Ovary (tissue), 10 donors: ENCODE measurements at regions of chr5 and their contacts with region 1.

Region 1: GRCh38 chr5:169302491-169303118 is 1.7 kb upstream of the SLIT3 start:
- DNase-seq: peak; percentile 63 to 82 (median 81)
- H3K4me3 ChIP-seq: no peak overlapping the region
- H3K27ac ChIP-seq: no peak overlapping the region
- H3K4me1 ChIP-seq: peaks cover 3% of the 10 kb centered on the region
- H3K27me3 ChIP-seq: no peaks in the 10 kb centered on the region
- CTCF ChIP-seq: peak; percentile 67 to 80 (median 70)
- EP300 ChIP-seq: no peak
- POLR2A ChIP-seq: no peak

Region 2: DNA sequence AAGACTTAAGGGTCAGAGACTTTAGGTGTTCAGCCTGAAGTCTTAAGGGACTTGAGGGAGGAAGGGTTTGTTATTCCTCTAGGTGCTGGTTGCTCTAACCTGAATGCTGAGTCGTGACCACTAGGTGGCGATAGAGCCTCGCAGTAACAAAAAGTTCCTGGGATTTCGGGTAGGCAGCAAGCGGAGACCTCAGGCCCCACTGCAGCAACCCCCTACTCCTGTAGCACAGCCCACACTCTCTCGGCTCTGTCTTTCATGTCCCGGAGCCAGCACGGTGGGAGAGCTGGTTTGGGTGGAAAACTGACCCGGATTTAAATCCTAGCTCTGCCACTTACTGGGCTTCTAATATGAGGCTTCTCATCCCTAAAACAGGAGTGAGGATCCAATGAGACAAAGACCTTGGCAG is 623.1 kb before region 1 on chr5:
- intact Hi-C with region 1: loop called in 3 of 4 experiments (anchors 5 to 10 kb)
- DNase-seq: peak; percentile 65 to 87 (median 84)
- H3K4me3 ChIP-seq: no peak overlapping the region
- H3K27ac ChIP-seq: no peak overlapping the region
- H3K4me1 ChIP-seq: peaks cover 8% of the 10 kb centered on the region
- H3K27me3 ChIP-seq: no peaks in the 10 kb centered on the region
- CTCF ChIP-seq: peak; percentile 76 to 84 (median 77)
- EP300 ChIP-seq: no peak
- POLR2A ChIP-seq: no peak

Region 3: DNA sequence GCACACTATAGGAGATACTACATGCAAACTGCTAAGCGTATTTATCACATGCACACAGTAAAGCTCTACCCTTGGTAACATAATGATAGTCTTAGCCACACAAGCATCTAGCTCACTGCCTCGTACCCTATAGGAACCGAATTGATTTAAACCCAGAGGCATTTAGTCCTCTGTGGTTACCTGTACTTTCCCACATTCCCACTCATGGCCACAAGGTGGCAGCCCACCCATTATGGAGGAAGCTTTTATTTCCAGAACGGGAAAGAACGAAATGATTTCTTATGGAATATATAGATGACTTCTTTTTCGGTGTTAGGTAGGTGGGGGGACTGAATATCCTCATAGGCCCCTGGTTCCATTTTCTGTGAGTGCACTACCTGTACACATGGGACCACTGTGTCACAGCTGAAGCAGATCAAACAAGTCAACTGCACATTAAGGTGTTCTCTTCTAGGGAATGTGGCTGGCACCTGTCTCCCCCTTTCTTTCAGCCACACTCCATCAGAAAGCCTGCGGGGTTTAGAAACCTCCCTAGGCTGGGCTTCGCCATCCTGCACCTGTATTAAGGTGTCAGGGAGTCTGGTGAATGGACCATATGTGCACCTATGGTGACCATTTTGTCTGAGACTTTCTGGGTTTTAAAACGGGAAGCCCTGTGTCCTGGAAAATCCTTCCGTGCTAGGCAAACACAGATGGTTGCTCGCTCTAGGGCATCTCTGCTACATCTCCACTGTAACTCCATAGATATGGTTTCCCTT is 314.9 kb before region 1 on chr5:
- intact Hi-C with region 1: loop called (anchors 5 to 10 kb)
- DNase-seq: peak; percentile 50 to 83 (median 80)
- H3K4me3 ChIP-seq: no peak overlapping the region
- H3K27ac ChIP-seq: no peak overlapping the region
- H3K4me1 ChIP-seq: no peaks in the 10 kb centered on the region
- H3K27me3 ChIP-seq: no peaks in the 10 kb centered on the region
- CTCF ChIP-seq: peak; percentile 70 to 85 (median 75)
- EP300 ChIP-seq: no peak
- POLR2A ChIP-seq: no peak

Region 4: GRCh38 chr5:169003721-169004541 is 298.7 kb before region 1 on chr5:
- intact Hi-C with region 1: loop called in 2 of 4 experiments (anchors 2 to 5 kb)
- DNase-seq: peak; percentile 49 to 74 (median 62)
- H3K4me3 ChIP-seq: no peak overlapping the region
- H3K27ac ChIP-seq: peak overlapping the region in 1 of 2 donors; percentile 70
- H3K4me1 ChIP-seq: peaks cover 4% of the 10 kb centered on the region
- H3K27me3 ChIP-seq: no peaks in the 10 kb centered on the region
- CTCF ChIP-seq: peak; percentile 20 to 33 (median 26)
- EP300 ChIP-seq: no peak
- POLR2A ChIP-seq: no peak

Region 5: GRCh38 chr5:169009123-169009522 is 293.5 kb before region 1 on chr5:
- intact Hi-C with region 1: loop called in 2 of 4 experiments (anchors 2 to 5 kb)
- DNase-seq: no peak
- H3K4me3 ChIP-seq: no peak overlapping the region
- H3K27ac ChIP-seq: no peak overlapping the region
- H3K4me1 ChIP-seq: peaks cover 6% of the 10 kb centered on the region
- H3K27me3 ChIP-seq: no peaks in the 10 kb centered on the region
- CTCF ChIP-seq: no peak
- EP300 ChIP-seq: no peak
- POLR2A ChIP-seq: no peak

Region 6: DNA sequence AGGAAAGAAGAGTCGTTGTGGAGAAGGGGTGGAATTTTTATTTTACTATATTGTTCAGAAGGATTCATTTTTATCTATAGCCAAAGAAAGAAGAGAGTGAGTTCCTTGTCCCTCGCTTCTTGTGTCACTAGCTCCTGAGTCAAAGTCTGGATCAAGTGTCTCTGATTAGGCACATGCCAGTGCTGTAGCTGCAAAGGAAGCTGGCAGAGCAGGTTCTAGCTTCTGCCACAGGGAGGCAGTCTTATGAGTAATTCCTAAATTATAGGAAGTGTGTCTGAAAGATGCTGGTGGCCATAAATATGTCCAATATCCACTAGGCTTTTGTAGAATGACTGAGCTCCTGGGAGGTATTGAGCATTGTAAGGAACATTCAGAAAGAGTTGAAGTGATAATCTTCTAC is 419.2 kb after region 1 on chr5:
- intact Hi-C with region 1: no loop called
- DNase-seq: no peak
- H3K4me3 ChIP-seq: no peak overlapping the region
- H3K27ac ChIP-seq: no peak overlapping the region
- H3K4me1 ChIP-seq: no peaks in the 10 kb centered on the region
- H3K27me3 ChIP-seq: no peaks in the 10 kb centered on the region
- CTCF ChIP-seq: no peak
- EP300 ChIP-seq: no peak
- POLR2A ChIP-seq: no peak